Activated CD4-positive, alpha-beta T cell treated with anti-CD3 and anti-CD28 coated beads, Interleukin-2, amount 10 ng/mL, durations not matched to agents 7 days and 5 days (primary cell): ENCODE measurements at regions of chr19 and their contacts with region 1.

Region 1: DNA sequence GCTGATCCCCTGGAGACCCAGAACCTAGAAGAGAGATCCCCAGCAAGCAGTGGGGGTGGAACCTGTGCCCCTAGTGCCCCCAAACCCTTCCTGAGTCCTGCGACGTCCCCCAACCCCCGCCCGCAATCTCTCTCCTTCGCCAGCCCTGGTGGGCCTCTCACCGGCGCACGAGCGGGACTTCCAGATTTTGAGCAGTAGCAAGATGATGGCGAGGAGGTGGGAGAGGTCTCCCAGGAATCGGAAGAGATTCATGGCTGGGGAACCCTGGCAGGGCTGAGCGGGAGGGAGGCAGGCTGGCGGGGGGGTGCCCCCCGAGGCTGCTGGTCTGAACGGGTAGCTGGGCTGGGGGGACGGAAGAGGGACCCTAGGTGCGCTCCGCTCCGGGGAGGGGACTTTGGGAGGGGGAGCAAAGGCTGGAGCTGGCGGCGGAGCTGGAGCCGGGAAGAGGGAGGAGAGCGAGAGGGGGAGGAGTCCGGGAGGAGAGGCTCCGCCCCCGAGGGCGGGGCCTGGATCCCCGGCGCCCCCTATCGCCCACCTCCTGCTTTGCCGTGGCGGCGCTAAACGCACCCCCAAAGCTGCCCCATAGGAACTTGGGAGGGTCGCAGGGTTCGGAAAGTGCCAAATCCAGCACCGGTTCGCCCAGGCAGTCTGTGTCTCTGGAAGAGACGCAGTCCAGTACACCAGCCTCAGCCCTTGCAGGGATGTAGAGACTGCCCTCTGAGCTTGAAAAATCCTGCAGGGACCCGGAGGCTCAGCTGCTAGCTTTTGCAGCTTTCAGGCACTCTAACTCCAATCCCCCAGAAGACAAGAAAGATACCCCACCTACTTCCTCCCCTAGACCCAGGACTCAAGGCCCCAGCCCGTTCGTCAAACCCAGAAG is at the start of gene KDELR1:
- DNase-seq: peak; percentile 70
- H3K4me3 Mint-ChIP-seq: peak within 1 kb of the TSS; percentile 90
- H3K27ac Mint-ChIP-seq: peak within 1 kb of the TSS; percentile 96
- H3K4me1 Mint-ChIP-seq: peaks cover 28% of the 10 kb centered on the region
- H3K27me3 Mint-ChIP-seq: peaks cover 39% of the 10 kb centered on the region
- total RNA-seq, gene KDELR1: 69.6 to 81.6 TPM

Region 2: DNA sequence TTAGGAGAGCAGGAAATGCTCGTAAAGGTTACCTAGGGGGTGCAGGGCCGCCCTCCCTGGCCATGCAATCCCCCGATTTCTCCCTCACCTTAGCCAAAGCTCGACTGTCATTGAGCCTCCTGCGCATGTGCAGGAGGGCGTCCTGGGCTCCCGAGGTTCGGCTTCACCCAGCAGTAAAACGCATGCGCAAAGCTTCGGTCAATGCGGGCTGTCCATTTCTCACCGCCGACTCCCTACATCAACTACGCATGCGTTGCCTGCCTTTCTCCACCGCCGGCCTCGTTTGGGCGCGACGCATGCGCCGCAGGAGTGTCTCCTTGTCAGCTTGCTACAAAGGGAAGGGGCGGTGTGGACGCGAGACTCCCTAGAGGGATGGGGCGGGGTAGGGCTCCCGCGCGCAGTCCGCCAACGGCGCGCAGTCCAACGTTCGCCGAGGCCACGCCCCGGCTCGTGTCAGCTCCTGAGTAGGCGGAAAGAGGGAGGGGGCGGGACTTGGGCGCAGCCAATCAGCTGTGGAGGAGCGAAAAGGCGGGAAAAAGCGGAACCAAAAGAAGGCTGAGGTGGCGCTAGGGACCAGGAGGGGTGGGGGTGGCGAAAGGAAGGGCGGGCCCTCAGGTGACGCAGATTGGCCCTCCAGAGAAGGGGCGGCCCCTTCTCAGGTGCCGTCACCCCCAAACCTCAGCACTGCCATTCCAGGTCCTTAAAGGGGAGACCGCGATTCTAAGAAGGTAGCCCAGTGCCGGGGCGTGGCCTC is 27.4 kb before region 1 on chr19 and contains the starts of genes SYNGR4 and TMEM143:
- CTCF ChIA-PET with region 1: interaction called, 15 read pairs
- POLR2A ChIA-PET with region 1: no interaction called
- DNase-seq: peak; percentile 99
- H3K4me3 Mint-ChIP-seq: peak within 1 kb of the TSS; percentile 79
- H3K27ac Mint-ChIP-seq: peak within 1 kb of the TSS; percentile 92
- H3K4me1 Mint-ChIP-seq: peaks cover 20% of the 10 kb centered on the region
- H3K27me3 Mint-ChIP-seq: no peaks in the 10 kb centered on the region
- total RNA-seq, gene SYNGR4: not detected
- total RNA-seq, gene TMEM143: 19.0 to 21.7 TPM

Region 3: DNA sequence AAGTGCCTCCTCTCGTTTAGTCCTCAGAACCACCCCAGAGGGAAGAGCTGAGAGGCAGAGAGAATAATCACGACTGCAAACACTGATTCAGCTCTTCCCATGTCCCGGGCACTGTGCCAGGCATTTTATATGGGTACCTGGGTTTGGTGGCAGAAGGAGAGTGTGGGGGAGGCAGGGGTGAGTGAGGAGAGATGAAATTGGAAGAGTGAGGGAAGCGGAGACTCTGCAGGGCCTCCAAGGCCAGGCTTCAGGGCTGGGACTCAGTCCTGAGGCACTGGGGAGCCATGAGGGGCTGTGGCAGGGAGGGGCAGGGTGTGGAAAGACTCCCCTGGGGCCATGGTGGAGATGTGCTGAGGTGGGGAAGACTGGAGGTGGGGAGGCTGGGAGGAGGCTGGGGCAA is 18.4 kb before region 1 on chr19:
- CTCF ChIA-PET with region 1: interaction called, 12 read pairs
- POLR2A ChIA-PET with region 1: no interaction called
- DNase-seq: no peak
- H3K4me3 Mint-ChIP-seq: no peak overlapping the region
- H3K27ac Mint-ChIP-seq: peak overlapping the region; percentile 50
- H3K4me1 Mint-ChIP-seq: no peaks in the 10 kb centered on the region
- H3K27me3 Mint-ChIP-seq: no peaks in the 10 kb centered on the region

Region 4: GRCh38 chr19:48458016-48458415 is 66.7 kb after region 1 on chr19:
- CTCF ChIA-PET with region 1: interaction called, 10 read pairs
- POLR2A ChIA-PET with region 1: no interaction called
- DNase-seq: no peak
- H3K4me3 Mint-ChIP-seq: no peak overlapping the region
- H3K27ac Mint-ChIP-seq: peak overlapping the region; percentile 3
- H3K4me1 Mint-ChIP-seq: peaks cover 2% of the 10 kb centered on the region
- H3K27me3 Mint-ChIP-seq: no peaks in the 10 kb centered on the region

Region 5: GRCh38 chr19:48614431-48615230 is 223.3 kb after region 1 on chr19 and contains the start of gene FAM83E:
- CTCF ChIA-PET with region 1: no interaction called
- POLR2A ChIA-PET with region 1: no interaction called
- DNase-seq: no peak
- H3K4me3 Mint-ChIP-seq: no peak within 1 kb of the TSS
- H3K27ac Mint-ChIP-seq: peak within 1 kb of the TSS; percentile 46
- H3K4me1 Mint-ChIP-seq: peaks cover 23% of the 10 kb centered on the region
- H3K27me3 Mint-ChIP-seq: no peaks in the 10 kb centered on the region
- total RNA-seq, gene FAM83E: 2.5 TPM